Activated CD8-positive, alpha-beta T cell treated with anti-CD3 and anti-CD28 coated beads, Interleukin-2, amount 10 ng/mL, durations not matched to agents 7 days and 5 days (primary cell): ENCODE measurements at regions of chr14 and their contacts with region 1.

Region 1: GRCh38 chr14:21978184-21978998 is 304.8 kb upstream of the OR4E1 start:
- DNase-seq: peak; percentile 77
- ATAC-seq: peak; percentile 84
- H3K4me3 Mint-ChIP-seq: peak overlapping the region; percentile 69
- H3K27ac Mint-ChIP-seq: peak overlapping the region; percentile 53
- H3K4me1 Mint-ChIP-seq: peaks cover 23% of the 10 kb centered on the region
- H3K27me3 Mint-ChIP-seq: peaks cover 27% of the 10 kb centered on the region

Region 2: DNA sequence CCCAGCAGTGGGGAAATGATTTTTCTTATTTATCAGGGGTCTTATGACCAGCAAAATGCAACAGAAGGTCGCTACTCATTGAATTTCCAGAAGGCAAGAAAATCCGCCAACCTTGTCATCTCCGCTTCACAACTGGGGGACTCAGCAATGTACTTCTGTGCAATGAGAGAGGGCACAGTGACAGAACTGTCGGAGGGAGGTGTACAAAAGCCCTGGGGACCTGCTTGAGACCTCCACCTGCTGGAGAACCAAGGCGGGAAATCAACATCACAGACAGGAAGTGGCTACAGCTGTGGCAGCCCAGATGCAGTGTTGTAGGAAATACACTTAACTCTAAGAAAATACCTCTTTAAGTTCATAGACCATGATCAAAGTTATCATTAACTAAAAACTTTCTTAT is 53.9 kb before region 1 on chr14:
- CTCF ChIA-PET with region 1: interaction called, 99 read pairs
- POLR2A ChIA-PET with region 1: no interaction called
- DNase-seq: peak; percentile 83
- ATAC-seq: peak; percentile 86
- H3K4me3 Mint-ChIP-seq: peak overlapping the region; percentile 64
- H3K27ac Mint-ChIP-seq: peak overlapping the region; percentile 95
- H3K4me1 Mint-ChIP-seq: peaks cover 57% of the 10 kb centered on the region
- H3K27me3 Mint-ChIP-seq: no peaks in the 10 kb centered on the region

Region 3: DNA sequence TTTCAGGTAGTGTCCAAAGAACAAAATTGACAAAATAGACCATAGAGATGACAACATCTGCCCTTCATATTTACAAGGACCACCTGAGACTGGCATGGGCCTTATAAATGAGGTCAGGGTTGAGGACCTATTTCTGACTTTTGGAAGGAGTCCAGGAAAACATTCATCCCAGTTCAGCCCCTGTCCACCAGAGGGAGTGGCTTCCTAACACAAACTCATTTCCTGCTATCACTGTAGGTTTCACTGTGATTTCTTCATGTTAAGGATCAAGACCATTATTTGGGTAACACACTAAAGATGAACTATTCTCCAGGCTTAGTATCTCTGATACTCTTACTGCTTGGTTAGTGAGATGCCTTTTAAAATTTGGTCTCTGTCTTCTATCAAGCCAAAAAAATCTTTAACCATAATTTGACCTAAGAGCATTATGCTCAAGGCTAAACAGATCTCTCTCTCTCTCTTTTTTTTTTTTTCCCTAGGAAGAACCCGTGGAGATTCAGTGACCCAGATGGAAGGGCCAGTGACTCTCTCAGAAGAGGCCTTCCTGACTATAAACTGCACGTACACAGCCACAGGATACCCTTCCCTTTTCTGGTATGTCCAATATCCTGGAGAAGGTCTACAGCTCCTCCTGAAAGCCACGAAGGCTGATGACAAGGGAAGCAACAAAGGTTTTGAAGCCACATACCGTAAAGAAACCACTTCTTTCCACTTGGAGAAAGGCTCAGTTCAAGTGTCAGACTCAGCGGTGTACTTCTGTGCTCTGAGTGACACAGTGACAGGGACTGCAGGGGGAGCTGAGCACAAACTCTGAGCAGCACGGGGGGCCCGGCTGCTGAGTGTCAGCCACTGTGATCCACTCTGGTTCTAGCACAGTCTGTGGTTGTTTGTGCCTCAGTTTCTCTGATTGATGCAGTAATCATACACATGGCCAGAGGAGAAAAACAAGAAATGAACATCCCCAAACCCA is 37.2 kb before region 1 on chr14:
- CTCF ChIA-PET with region 1: interaction called, 17 read pairs
- POLR2A ChIA-PET with region 1: no interaction called
- DNase-seq: peak; percentile 50
- ATAC-seq: peak; percentile 84
- H3K4me3 Mint-ChIP-seq: peak overlapping the region; percentile 54
- H3K27ac Mint-ChIP-seq: peak overlapping the region; percentile 75
- H3K4me1 Mint-ChIP-seq: peaks cover 22% of the 10 kb centered on the region
- H3K27me3 Mint-ChIP-seq: peaks cover 26% of the 10 kb centered on the region

Region 4: DNA sequence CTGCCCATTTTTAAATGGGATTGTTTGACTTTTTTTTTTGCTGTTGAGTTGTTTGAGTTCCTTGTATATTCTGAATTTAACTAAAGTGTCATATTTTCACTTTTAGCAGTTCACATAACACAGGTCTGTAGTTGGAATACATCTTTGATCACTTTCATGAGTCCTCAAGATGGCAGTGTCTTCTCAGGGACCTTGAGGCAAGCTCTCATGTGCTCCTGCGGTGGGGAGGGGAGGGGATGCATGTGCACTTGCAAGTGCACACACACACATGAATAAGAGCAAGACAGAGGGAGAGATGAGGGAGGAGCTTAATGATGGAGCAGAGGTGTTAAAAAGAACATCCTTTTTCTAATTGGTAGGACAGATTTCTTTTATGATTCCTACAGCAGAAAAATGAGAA is 13.3 kb before region 1 on chr14:
- CTCF ChIA-PET with region 1: interaction called, 41 read pairs
- POLR2A ChIA-PET with region 1: no interaction called
- DNase-seq: peak; percentile 70
- ATAC-seq: peak; percentile 92
- H3K4me3 Mint-ChIP-seq: peak overlapping the region; percentile 13
- H3K27ac Mint-ChIP-seq: peak overlapping the region; percentile 8
- H3K4me1 Mint-ChIP-seq: peaks cover 31% of the 10 kb centered on the region
- H3K27me3 Mint-ChIP-seq: peaks cover 6% of the 10 kb centered on the region

Region 5: DNA sequence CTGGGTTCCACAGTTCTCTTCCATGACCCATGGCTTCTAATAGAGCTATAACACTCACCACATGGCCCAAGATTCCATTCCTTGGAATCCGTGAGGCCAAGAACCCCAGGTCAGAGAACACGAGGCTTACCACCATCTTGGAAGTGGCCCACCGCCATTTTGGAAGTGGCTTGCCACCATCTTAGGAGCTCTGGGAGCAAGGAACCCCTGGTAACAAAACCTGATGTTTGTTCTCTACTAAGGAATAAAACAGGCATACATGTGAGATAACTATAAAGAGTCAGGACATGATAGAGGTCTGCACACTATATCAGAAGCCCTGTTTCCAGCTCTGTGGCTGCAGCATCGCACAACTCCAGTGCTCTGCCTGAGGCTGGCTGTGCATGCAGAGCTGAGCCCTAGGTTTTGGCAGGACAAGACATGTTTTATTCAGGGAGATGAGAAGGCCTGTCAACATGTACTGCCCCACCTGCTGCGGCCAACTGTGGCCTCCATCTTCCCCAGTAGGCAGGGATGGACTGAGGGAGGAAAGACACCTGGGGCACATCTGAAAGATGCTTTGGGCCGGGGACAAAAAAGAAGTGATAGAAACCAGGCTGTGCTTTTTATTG is 265.7 kb after region 1 on chr14:
- CTCF ChIA-PET with region 1: no interaction called
- POLR2A ChIA-PET with region 1: no interaction called
- DNase-seq: no peak
- ATAC-seq: no peak
- H3K4me3 Mint-ChIP-seq: no peak overlapping the region
- H3K27ac Mint-ChIP-seq: no peak overlapping the region
- H3K4me1 Mint-ChIP-seq: no peaks in the 10 kb centered on the region
- H3K27me3 Mint-ChIP-seq: no peaks in the 10 kb centered on the region